Activated naive CD4-positive, alpha-beta T cell treated with anti-CD3 and anti-CD28 coated beads for 36 hours (primary cell): ENCODE measurements at regions of chr19 and their contacts with region 1.

Region 1: GRCh38 chr19:7829561-7830271 is at the start of gene EVI5L:
- DNase-seq: peak; percentile 99
- H3K4me3 Mint-ChIP-seq: peak within 1 kb of the TSS; percentile 84
- H3K27ac Mint-ChIP-seq: peak within 1 kb of the TSS; percentile 68
- H3K4me1 Mint-ChIP-seq: peaks cover 18% of the 10 kb centered on the region
- H3K27me3 Mint-ChIP-seq: peaks cover 6% of the 10 kb centered on the region
- total RNA-seq, gene EVI5L: 5.2 TPM

Region 2: DNA sequence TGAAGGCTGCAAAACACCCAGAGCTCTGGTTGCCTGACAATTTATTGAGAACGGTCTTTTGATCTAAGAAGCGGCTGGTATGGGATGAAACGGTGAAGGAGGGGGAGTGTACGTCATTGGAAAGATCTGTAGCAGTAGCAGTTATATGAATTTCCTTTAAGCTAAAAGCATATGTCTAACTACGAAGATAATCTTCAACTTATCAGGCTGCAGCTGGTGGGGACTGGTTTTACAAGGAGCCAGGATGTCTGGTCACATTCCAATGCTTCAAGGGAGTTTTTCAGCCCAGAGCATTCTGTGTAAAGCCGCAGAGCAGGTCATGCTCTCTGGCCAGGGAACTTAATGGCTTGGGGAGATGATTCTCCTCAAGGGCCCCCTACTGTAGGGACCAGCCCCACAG is 37.5 kb before region 1 on chr19:
- CTCF ChIA-PET with region 1: no interaction called
- intact Hi-C with region 1: no loop called
- DNase-seq: no peak
- H3K4me3 Mint-ChIP-seq: no peak overlapping the region
- H3K27ac Mint-ChIP-seq: no peak overlapping the region
- H3K4me1 Mint-ChIP-seq: peaks cover 11% of the 10 kb centered on the region
- H3K27me3 Mint-ChIP-seq: peaks cover 26% of the 10 kb centered on the region

Region 3: DNA sequence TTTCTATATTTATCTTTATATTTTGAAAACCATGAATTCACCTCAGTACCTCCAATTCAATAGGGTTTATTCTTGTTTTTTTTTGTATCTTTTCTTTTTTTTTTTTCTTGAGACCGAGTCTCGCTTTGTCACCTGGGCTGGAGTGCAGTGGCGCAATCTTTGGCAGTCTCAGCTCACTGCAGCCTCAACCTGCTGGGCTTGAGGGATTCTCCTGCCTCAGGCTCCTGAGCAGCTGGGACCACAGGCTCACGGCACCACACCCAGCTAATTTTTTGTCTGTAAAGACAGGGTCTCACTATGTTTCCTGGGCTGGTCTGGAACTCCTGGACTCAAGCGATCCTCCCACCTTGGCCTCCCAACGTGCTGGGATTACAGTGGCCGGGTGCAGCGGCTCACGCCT is 22.8 kb before region 1 on chr19:
- CTCF ChIA-PET with region 1: no interaction called
- intact Hi-C with region 1: loop called (anchors 1 kb)
- DNase-seq: no peak
- H3K4me3 Mint-ChIP-seq: no peak overlapping the region
- H3K27ac Mint-ChIP-seq: no peak overlapping the region
- H3K4me1 Mint-ChIP-seq: peaks cover 12% of the 10 kb centered on the region
- H3K27me3 Mint-ChIP-seq: peaks cover 24% of the 10 kb centered on the region

Region 4: GRCh38 chr19:7868676-7869452 is 39.1 kb after region 1 on chr19:
- CTCF ChIA-PET with region 1: interaction called, 5 read pairs
- intact Hi-C with region 1: loop called (anchors 1 kb)
- DNase-seq: peak; percentile 82
- H3K4me3 Mint-ChIP-seq: peak overlapping the region; percentile 68
- H3K27ac Mint-ChIP-seq: peak overlapping the region; percentile 59
- H3K4me1 Mint-ChIP-seq: peaks cover 46% of the 10 kb centered on the region
- H3K27me3 Mint-ChIP-seq: peaks cover 35% of the 10 kb centered on the region

Region 5: GRCh38 chr19:7903244-7904073 is 73.7 kb after region 1 on chr19 and contains the start of gene MAP2K7:
- CTCF ChIA-PET with region 1: no interaction called
- intact Hi-C with region 1: loop called (anchors 1 kb)
- DNase-seq: peak; percentile 100
- H3K4me3 Mint-ChIP-seq: peak within 1 kb of the TSS; percentile 88
- H3K27ac Mint-ChIP-seq: peak within 1 kb of the TSS; percentile 84
- H3K4me1 Mint-ChIP-seq: peaks cover 24% of the 10 kb centered on the region
- H3K27me3 Mint-ChIP-seq: no peaks in the 10 kb centered on the region
- total RNA-seq, gene MAP2K7: 39.1 to 39.8 TPM

Region 6: GRCh38 chr19:7919610-7920518 is 90.1 kb after region 1 on chr19 and contains the start of gene SNAPC2:
- CTCF ChIA-PET with region 1: no interaction called
- intact Hi-C with region 1: loop called (anchors 1 kb)
- DNase-seq: peak; percentile 96
- H3K4me3 Mint-ChIP-seq: peak within 1 kb of the TSS; percentile 81
- H3K27ac Mint-ChIP-seq: peak within 1 kb of the TSS; percentile 73
- H3K4me1 Mint-ChIP-seq: peaks cover 38% of the 10 kb centered on the region
- H3K27me3 Mint-ChIP-seq: peaks cover 25% of the 10 kb centered on the region
- total RNA-seq, gene SNAPC2: 10.9 to 12.4 TPM

Region 7: DNA sequence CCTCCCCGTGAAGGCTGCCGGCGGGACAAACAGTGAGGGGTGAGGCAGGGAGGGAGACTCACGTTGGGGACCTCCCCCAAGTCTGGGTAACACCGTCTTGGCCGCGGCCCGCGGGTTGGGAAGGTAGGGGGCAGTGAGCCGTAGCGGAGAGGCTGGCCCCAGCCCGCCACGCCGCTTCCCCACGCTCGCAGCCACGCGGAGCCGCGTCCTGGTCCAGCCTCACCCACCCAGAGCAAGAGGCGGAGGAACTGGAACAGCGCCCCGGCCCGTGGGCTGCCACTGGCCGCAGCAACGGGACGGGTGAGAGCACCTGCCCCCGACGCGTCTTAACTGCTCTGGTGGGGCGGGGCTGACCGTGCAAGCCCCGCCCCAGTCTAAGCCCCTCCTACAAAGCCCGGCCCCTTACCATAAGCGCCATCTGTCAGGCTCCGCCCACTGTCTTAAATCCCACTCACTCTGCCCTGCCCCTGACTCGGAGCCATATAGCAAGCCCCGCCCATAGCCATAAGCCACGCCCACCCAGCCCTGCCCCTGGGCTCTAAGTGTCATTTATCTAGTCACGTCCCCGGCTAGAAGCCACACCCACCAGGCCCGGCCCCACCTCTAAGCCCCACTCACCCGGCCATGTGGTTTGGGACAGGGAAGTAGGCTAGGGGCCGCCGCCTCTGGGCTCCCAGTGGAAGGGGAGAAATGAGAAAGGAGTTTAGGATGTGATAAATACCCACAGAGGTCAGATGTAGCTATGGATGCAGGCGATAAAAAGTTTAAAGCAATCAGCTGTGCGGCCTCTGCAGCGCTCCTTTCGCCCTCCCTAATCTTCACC is 220.8 kb after region 1 on chr19:
- CTCF ChIA-PET with region 1: no interaction called
- intact Hi-C with region 1: loop called (anchors 1 kb)
- DNase-seq: peak; percentile 95
- H3K4me3 Mint-ChIP-seq: peak overlapping the region; percentile 47
- H3K27ac Mint-ChIP-seq: no peak overlapping the region
- H3K4me1 Mint-ChIP-seq: peaks cover 15% of the 10 kb centered on the region
- H3K27me3 Mint-ChIP-seq: no peaks in the 10 kb centered on the region